ENCODE measurements at regions of chr1 and their contacts with region 1.

Region 1: GRCh38 chr1:30824736-30825429 is 67.3 kb upstream of the LAPTM5 start:
- DNase-seq: peak; percentile 72
- ATAC-seq: no peak

Region 2: GRCh38 chr1:30359539-30360220 is 465.2 kb before region 1 on chr1:
- intact Hi-C with region 1: loop called (anchors 5 kb)
- DNase-seq: no peak
- ATAC-seq: no peak

Region 3: DNA sequence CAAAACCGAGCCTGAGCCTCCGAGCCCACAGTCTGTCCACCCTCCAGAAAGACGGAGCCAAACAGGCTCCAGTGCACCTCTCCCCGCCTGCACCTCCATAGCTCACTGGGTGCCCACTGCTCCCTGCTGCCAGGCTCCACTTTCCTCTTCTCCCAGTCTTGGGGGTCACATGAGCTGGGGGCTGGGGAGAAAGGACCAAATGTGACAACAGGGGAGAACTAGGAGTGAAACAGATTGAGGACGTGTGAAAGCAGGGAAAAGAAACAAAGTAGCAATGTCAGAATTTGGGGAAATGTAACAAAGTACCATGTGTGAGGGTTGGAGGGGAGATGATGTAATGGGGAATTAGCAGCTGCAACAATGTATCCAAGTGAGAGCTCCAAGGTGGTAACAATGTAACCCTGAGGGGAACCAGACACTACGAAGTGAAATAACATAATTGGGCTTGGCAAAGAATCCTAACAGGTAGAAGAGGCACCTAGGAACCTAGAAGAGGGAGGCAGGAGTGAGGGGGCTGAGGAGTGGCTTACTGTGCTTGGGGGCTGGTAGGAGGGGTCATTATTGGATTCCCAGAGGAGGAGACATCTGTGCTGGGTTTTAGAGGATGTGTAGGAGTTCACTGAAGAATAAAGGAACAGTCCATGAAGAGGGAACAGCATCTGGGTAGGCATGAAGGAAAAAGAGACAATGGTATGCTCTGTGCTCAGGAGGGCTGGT is 71.2 kb after region 1 on chr1:
- intact Hi-C with region 1: no loop called
- DNase-seq: no peak
- ATAC-seq: no peak